H1 (cell line): ENCODE measurements at regions of chr13 and their contacts with region 1.

Region 1: DNA sequence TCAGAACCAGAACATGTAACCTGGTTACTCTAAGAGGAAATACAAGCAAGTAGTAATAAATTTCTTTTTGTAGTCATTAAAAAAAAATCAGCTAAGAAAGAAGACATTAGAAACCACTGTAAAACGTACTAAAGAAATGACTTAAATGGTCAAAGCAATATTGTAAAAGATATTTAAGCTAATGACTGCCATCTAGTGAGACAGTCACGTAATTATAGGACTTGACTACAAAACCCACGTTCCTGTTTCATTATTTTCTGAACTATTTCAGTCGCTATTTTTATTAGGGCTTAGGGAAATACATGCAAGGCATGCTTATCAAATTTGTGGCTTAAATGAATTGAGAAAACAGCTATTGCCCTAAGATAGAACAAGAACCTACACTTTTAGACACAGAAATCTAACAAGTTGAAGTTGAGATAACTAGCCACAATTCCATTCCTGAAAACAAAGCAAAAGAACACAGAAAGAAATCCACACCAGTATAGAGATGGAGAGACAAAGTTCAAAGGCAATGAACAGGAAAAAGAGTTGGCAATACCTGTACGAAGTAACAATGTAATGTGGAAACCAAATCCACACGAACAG is 17.9 kb downstream of the ALG5 start:
- DNase-seq: no peak
- H3K4me3 ChIP-seq: no peak overlapping the region
- H3K27ac ChIP-seq: no peak overlapping the region
- H3K4me1 ChIP-seq: no peaks in the 10 kb centered on the region
- H3K27me3 ChIP-seq: no peaks in the 10 kb centered on the region
- CTCF ChIP-seq: peak in 2 of 3 experiments; percentile 22 to 44; a peak in 2 of 4 replicates
- EP300 ChIP-seq: no peak
- POLR2A ChIP-seq: no peak
- RAD21 ChIP-seq: peak; percentile 60 to 61

Region 2: DNA sequence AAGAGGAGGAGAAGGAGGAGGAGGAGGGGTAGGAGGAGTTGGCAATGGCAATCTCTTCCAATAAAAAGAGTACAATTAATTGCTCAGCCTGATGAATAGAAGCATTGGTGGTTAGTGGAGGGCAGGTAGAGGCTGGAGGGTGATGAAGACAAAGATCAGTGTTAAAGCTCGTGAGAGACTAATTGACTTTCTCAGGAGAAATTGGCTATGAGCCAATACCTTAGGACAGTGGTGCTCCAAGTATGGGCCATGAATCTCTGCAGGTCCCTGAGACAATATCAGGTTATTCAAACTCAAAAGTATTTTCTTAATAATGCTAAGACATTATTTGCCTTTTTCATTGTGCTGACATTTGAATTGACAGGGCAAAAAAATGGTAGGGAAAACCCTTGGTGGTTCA is 331.2 kb before region 1 on chr13:
- CTCF ChIA-PET with region 1: no interaction called
- POLR2A ChIA-PET with region 1: no interaction called
- DNase-seq: no peak
- H3K4me3 ChIP-seq: no peak overlapping the region
- H3K27ac ChIP-seq: no peak overlapping the region
- H3K4me1 ChIP-seq: no peaks in the 10 kb centered on the region
- H3K27me3 ChIP-seq: no peaks in the 10 kb centered on the region
- CTCF ChIP-seq: no peak
- EP300 ChIP-seq: no peak
- POLR2A ChIP-seq: no peak
- RAD21 ChIP-seq: no peak

Region 3: DNA sequence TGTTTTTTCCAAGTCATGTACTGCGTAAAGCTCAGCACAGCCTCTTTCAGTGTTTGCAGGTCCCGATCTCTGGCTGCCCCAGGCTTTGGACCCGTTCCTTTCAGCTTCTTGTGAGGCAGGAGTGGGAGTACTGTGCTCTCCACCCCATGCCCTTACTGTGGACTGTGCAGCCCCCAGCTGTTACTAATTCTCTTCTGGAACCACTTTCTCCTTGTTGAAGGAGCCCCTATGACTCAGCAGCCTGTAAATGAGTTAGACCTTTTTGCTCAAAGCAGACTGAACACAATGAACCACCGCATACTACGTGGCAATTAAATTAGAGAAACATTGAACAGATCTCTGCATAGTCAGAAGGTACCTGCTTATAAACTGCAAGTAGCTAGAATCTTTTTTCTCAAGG is 268.5 kb before region 1 on chr13:
- CTCF ChIA-PET with region 1: no interaction called
- POLR2A ChIA-PET with region 1: no interaction called
- DNase-seq: no peak
- H3K4me3 ChIP-seq: no peak overlapping the region
- H3K27ac ChIP-seq: no peak overlapping the region
- H3K4me1 ChIP-seq: no peaks in the 10 kb centered on the region
- H3K27me3 ChIP-seq: peaks cover 0 to 1% (median 0%) of the 10 kb centered on the region in 4 experiments; a peak in 1 of 7 replicates
- CTCF ChIP-seq: no peak
- EP300 ChIP-seq: no peak
- POLR2A ChIP-seq: no peak
- RAD21 ChIP-seq: no peak

Region 4: GRCh38 chr13:36778083-36778671 is 203.1 kb before region 1 on chr13:
- CTCF ChIA-PET with region 1: no interaction called
- POLR2A ChIA-PET with region 1: no interaction called
- DNase-seq: peak in 1 of 2 experiments; percentile 65
- H3K4me3 ChIP-seq: peak overlapping the region in 2 of 4 experiments; percentile 5 to 43; a peak in 4 of 8 replicates
- H3K27ac ChIP-seq: peak overlapping the region; percentile 67; the same call in 1 of the 2 replicates
- H3K4me1 ChIP-seq: peaks cover 9 to 15% (median 10%) of the 10 kb centered on the region in 4 experiments
- H3K27me3 ChIP-seq: no peaks in the 10 kb centered on the region
- CTCF ChIP-seq: no peak
- EP300 ChIP-seq: no peak
- POLR2A ChIP-seq: no peak; a peak in 1 of 3 replicates
- RAD21 ChIP-seq: peak in 1 of 2 experiments; percentile 6; a peak in 1 of 4 replicates

Region 5: GRCh38 chr13:36848199-36848982 is 132.9 kb before region 1 on chr13:
- CTCF ChIA-PET with region 1: interaction called, 85 read pairs
- POLR2A ChIA-PET with region 1: no interaction called
- DNase-seq: peak in 1 of 2 experiments; percentile 55
- H3K4me3 ChIP-seq: no peak overlapping the region
- H3K27ac ChIP-seq: no peak overlapping the region
- H3K4me1 ChIP-seq: no peaks in the 10 kb centered on the region
- H3K27me3 ChIP-seq: no peaks in the 10 kb centered on the region
- CTCF ChIP-seq: peak; percentile 40 to 50 (median 43)
- EP300 ChIP-seq: no peak
- POLR2A ChIP-seq: no peak
- RAD21 ChIP-seq: peak; percentile 36 to 56; a peak in 2 of 4 replicates

Region 6: DNA sequence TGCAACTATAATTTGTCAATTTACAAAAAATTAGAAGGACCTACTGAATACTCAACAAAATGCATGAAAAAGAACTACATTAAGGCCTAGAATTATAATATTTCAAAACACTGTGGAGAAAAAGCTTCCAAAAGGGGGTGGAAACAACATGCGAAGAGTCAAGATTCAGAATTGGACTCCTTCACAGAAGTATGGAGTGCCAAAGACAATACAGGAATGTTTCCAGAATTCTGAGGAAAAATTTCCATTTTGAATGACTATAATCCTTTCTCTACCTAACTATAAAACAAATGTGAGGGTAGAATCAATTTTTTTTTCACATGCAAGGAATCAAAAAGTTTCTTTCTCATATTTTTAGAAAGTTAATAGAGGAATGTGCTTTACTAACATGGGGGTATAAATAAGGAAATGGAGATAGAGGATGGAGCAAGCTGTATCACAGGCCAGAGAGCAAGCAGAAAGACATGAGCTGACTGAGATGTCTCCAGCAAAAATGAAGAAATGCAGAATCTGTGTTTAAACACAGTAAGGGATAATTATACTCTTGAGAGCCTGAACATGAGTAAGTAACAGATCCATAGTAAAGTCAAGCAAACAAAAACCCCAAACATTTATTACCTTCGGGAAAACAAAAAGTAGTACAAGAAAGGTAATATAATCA is 21.7 kb before region 1 on chr13:
- CTCF ChIA-PET with region 1: interaction called, 12 read pairs
- POLR2A ChIA-PET with region 1: interaction called, 4 read pairs
- DNase-seq: no peak
- H3K4me3 ChIP-seq: no peak overlapping the region
- H3K27ac ChIP-seq: no peak overlapping the region
- H3K4me1 ChIP-seq: 0 out of 7 replicates have a peak, but pooled peaks cover 0 to 3% (median 0%) of the 10 kb centered on the region in 4 experiments
- H3K27me3 ChIP-seq: no peaks in the 10 kb centered on the region
- CTCF ChIP-seq: no peak
- EP300 ChIP-seq: no peak
- POLR2A ChIP-seq: no peak
- RAD21 ChIP-seq: no peak

Region 7: GRCh38 chr13:36992340-36992739 is 11.1 kb after region 1 on chr13:
- CTCF ChIA-PET with region 1: interaction called, 19 read pairs
- POLR2A ChIA-PET with region 1: interaction called, 3 read pairs
- DNase-seq: no peak
- H3K4me3 ChIP-seq: no peak overlapping the region
- H3K27ac ChIP-seq: no peak overlapping the region
- H3K4me1 ChIP-seq: no peaks in the 10 kb centered on the region
- H3K27me3 ChIP-seq: no peaks in the 10 kb centered on the region
- CTCF ChIP-seq: no peak
- EP300 ChIP-seq: no peak
- POLR2A ChIP-seq: no peak
- RAD21 ChIP-seq: no peak

Region 8: GRCh38 chr13:37023871-37024270 is 42.6 kb after region 1 on chr13:
- CTCF ChIA-PET with region 1: no interaction called
- POLR2A ChIA-PET with region 1: no interaction called
- DNase-seq: no peak
- H3K4me3 ChIP-seq: no peak overlapping the region
- H3K27ac ChIP-seq: no peak overlapping the region
- H3K4me1 ChIP-seq: no peaks in the 10 kb centered on the region
- H3K27me3 ChIP-seq: no peaks in the 10 kb centered on the region
- CTCF ChIP-seq: no peak
- EP300 ChIP-seq: no peak
- POLR2A ChIP-seq: no peak
- RAD21 ChIP-seq: no peak